GM10248 (cell line): ENCODE measurements at regions of chr7 and their contacts with region 1.

Region 1: GRCh38 chr7:111223802-111224253 is 132.9 kb downstream of the LRRN3 start:
- DNase-seq: no peak
- CTCF ChIP-seq: no peak

Region 2: DNA sequence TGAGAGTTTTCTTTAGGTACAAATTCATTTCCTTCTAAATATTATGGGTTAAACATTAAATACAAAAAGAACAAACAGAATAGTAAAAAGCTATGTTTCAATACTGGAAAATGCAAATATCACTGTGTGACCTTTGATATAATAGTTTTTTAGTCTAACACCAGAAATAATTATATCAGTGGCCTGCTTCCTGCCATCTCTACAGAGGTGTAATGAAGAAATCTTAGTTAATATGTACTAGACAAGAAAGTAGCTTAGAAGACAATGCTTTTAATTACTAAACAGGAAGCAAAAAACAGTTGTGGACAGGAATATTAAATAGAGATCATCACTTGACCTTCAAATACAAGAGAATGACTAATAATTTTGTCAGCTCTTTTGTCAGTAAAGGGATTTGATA is 180.3 kb before region 1 on chr7:
- CTCF ChIA-PET with region 1: no interaction called
- POLR2A ChIA-PET with region 1: no interaction called
- DNase-seq: no peak
- CTCF ChIP-seq: no peak

Region 3: GRCh38 chr7:111183321-111183720 is 40.5 kb before region 1 on chr7:
- CTCF ChIA-PET with region 1: no interaction called
- POLR2A ChIA-PET with region 1: no interaction called
- DNase-seq: no peak
- CTCF ChIP-seq: no peak

Region 4: GRCh38 chr7:111205251-111205650 is 18.6 kb before region 1 on chr7:
- CTCF ChIA-PET with region 1: interaction called, 20 read pairs
- POLR2A ChIA-PET with region 1: no interaction called
- DNase-seq: no peak
- CTCF ChIP-seq: no peak

Region 5: GRCh38 chr7:111240371-111240770 is 16.5 kb after region 1 on chr7:
- CTCF ChIA-PET with region 1: no interaction called
- POLR2A ChIA-PET with region 1: no interaction called
- DNase-seq: no peak
- CTCF ChIP-seq: no peak